Naive thymus-derived CD4-positive, alpha-beta T cell (primary cell): ENCODE measurements at regions of chr2 and their contacts with region 1.

Region 1: GRCh38 chr2:233976690-233977294 is 59.6 kb downstream of the TRPM8 start:
- DNase-seq: peak in 6 of 9 donors; percentile 29 to 62 (median 55)
- ATAC-seq: peak; percentile 60
- H3K4me3 ChIP-seq: no peak overlapping the region
- H3K4me3 Mint-ChIP-seq: no peak overlapping the region
- H3K27ac ChIP-seq: no peak overlapping the region
- H3K27ac Mint-ChIP-seq: peak overlapping the region in 2 of 9 donors; percentile 7 to 69
- H3K4me1 ChIP-seq: peaks cover 0 to 25% of the 10 kb centered on the region in 2 donors
- H3K4me1 Mint-ChIP-seq: peaks cover 3 to 37% (median 25%) of the 10 kb centered on the region in 7 donors
- H3K27me3 ChIP-seq: no peaks in the 10 kb centered on the region
- H3K27me3 Mint-ChIP-seq: peaks cover 0 to 9% (median 0%) of the 10 kb centered on the region in 5 donors

Region 2: GRCh38 chr2:234102112-234102511 is 125.3 kb after region 1 on chr2:
- CTCF ChIA-PET with region 1: interaction called, 3 read pairs
- POLR2A ChIA-PET with region 1: no interaction called
- intact Hi-C with region 1: loop called (anchors 1 to 2 kb)
- DNase-seq: peak in 7 of 9 donors; percentile 16 to 64 (median 47)
- ATAC-seq: peak; percentile 73
- H3K4me3 ChIP-seq: no peak overlapping the region
- H3K4me3 Mint-ChIP-seq: peak overlapping the region in 8 of 10 donors; percentile 4 to 64 (median 28)
- H3K27ac ChIP-seq: no peak overlapping the region
- H3K27ac Mint-ChIP-seq: peak overlapping the region in 3 of 9 donors; percentile 9 to 64 (median 43)
- H3K4me1 ChIP-seq: peaks cover 36 to 37% of the 10 kb centered on the region in 2 donors
- H3K4me1 Mint-ChIP-seq: peaks cover 25 to 55% (median 43%) of the 10 kb centered on the region in 7 donors
- H3K27me3 ChIP-seq: no peaks in the 10 kb centered on the region
- H3K27me3 Mint-ChIP-seq: peaks cover 0 to 30% (median 0%) of the 10 kb centered on the region in 5 donors

Region 3: GRCh38 chr2:234125451-234126145 is 148.8 kb after region 1 on chr2:
- CTCF ChIA-PET with region 1: no interaction called
- POLR2A ChIA-PET with region 1: no interaction called
- intact Hi-C with region 1: no loop called
- DNase-seq: no peak
- ATAC-seq: no peak
- H3K4me3 ChIP-seq: no peak overlapping the region
- H3K4me3 Mint-ChIP-seq: no peak overlapping the region
- H3K27ac ChIP-seq: no peak overlapping the region
- H3K27ac Mint-ChIP-seq: no peak overlapping the region
- H3K4me1 ChIP-seq: no peaks in the 10 kb centered on the region
- H3K4me1 Mint-ChIP-seq: peaks cover 0 to 8% (median 4%) of the 10 kb centered on the region in 7 donors
- H3K27me3 ChIP-seq: no peaks in the 10 kb centered on the region
- H3K27me3 Mint-ChIP-seq: peaks cover 0 to 27% (median 0%) of the 10 kb centered on the region in 5 donors

Region 4: DNA sequence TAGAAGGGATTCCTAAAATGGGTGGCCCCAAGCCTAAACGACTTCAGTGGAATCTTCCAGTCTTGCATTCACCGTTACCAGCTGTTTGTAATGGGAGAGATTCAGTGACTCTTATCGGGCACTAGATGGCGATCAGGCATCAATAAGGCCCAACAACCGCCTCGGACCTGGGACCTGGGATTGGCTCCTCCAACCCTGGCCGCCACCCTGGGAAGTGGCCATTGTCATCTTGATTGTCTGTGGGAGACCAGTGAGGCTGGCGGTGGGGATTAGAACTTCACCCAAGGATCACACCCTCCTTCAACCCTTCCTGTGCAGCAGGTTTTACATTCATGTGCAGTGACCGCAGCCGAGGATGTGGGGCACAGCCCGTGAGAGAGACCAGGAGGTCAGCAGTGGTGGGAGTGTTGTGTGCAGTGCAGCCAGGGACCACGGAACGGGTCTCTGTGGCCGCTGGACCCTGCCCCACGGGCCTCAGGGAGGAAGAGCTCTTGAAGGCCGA is 159.0 kb after region 1 on chr2:
- CTCF ChIA-PET with region 1: interaction called, 9 read pairs
- POLR2A ChIA-PET with region 1: interaction called, 3 read pairs
- intact Hi-C with region 1: loop called (anchors 1 to 2 kb)
- DNase-seq: peak; percentile 13 to 52 (median 40)
- ATAC-seq: peak; percentile 73
- H3K4me3 ChIP-seq: peak overlapping the region; percentile 2
- H3K4me3 Mint-ChIP-seq: peak overlapping the region in 2 of 10 donors; percentile 9 to 30
- H3K27ac ChIP-seq: no peak overlapping the region
- H3K27ac Mint-ChIP-seq: peak overlapping the region; percentile 31 to 83 (median 56)
- H3K4me1 ChIP-seq: peaks cover 23 to 24% of the 10 kb centered on the region in 2 donors
- H3K4me1 Mint-ChIP-seq: peaks cover 6 to 31% (median 29%) of the 10 kb centered on the region in 7 donors
- H3K27me3 ChIP-seq: no peaks in the 10 kb centered on the region
- H3K27me3 Mint-ChIP-seq: peaks cover 0 to 17% (median 0%) of the 10 kb centered on the region in 5 donors

Region 5: GRCh38 chr2:234278556-234279255 is 301.9 kb after region 1 on chr2:
- CTCF ChIA-PET with region 1: no interaction called
- POLR2A ChIA-PET with region 1: no interaction called
- intact Hi-C with region 1: loop called in 1 of 2 experiments (anchors 5 kb)
- DNase-seq: peak in 7 of 9 donors; percentile 28 to 77 (median 69)
- ATAC-seq: peak; percentile 81
- H3K4me3 ChIP-seq: no peak overlapping the region
- H3K4me3 Mint-ChIP-seq: peak overlapping the region in 9 of 10 donors; percentile 0 to 64 (median 52)
- H3K27ac ChIP-seq: no peak overlapping the region
- H3K27ac Mint-ChIP-seq: peak overlapping the region; percentile 38 to 90 (median 77)
- H3K4me1 ChIP-seq: peaks cover 16 to 42% of the 10 kb centered on the region in 2 donors
- H3K4me1 Mint-ChIP-seq: peaks cover 27 to 75% (median 59%) of the 10 kb centered on the region in 7 donors
- H3K27me3 ChIP-seq: no peaks in the 10 kb centered on the region
- H3K27me3 Mint-ChIP-seq: no peaks in the 10 kb centered on the region

Region 6: DNA sequence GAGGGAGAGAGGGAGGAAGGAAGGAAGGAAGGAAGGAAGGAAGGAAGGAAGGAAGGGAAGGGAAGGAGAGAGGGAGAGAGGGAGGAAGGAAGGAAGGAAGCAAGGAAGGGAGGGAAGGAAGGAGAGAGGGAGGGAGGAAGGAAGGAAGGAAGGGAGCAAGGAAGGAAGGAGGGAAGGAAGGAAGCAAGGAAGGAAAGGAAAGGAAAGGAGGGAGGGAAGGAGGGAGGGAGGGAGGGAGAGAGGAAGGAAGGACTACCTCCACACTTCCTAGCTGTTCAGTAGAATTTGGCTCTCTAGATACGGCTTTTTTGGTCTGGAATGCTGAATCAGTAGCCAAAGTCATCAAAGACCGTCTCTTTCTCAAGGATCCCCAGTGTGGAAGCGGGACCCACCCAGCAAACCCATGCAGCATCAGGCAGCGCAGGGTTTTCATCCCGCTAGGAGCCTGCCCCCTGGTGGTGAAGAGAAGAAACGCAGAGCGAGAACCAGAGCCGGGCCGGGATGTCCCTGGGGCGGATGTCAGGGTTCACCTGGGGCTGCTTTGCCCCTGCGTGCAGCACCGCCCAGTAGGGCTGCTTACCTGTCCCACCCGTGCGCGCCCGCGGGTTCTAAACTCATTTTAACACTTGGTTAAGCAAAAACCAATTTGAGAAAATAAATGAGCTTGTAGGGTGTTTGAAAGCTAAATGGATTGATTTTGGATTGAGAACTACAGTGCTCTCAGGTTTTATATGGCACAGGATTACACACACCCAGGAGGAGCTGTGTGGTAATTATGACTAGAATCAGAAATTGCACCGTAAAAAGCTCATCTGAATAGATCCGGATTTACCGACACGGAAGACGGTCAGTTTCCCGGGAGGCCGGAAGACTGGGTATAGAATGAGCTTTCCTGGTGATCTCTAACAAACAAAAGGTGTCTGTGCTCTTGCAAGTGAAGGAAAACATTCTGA is 568.1 kb after region 1 on chr2:
- CTCF ChIA-PET with region 1: interaction called, 12 read pairs
- POLR2A ChIA-PET with region 1: no interaction called
- intact Hi-C with region 1: loop called (anchors 1 kb)
- DNase-seq: peak; percentile 54 to 83 (median 69)
- ATAC-seq: peak; percentile 93
- H3K4me3 ChIP-seq: no peak overlapping the region
- H3K4me3 Mint-ChIP-seq: no peak overlapping the region
- H3K27ac ChIP-seq: no peak overlapping the region
- H3K27ac Mint-ChIP-seq: no peak overlapping the region
- H3K4me1 ChIP-seq: peaks cover 0 to 5% of the 10 kb centered on the region in 2 donors
- H3K4me1 Mint-ChIP-seq: peaks cover 0 to 9% (median 1%) of the 10 kb centered on the region in 7 donors
- H3K27me3 ChIP-seq: no peaks in the 10 kb centered on the region
- H3K27me3 Mint-ChIP-seq: peaks cover under 1 to 31% (median 13%) of the 10 kb centered on the region in 5 donors

Region 7: GRCh38 chr2:235116885-235117492 is 1140.2 kb after region 1 on chr2:
- CTCF ChIA-PET with region 1: no interaction called
- POLR2A ChIA-PET with region 1: no interaction called
- intact Hi-C with region 1: loop called in 1 of 2 experiments (anchors 5 kb)
- DNase-seq: peak in 4 of 9 donors; percentile 7 to 10 (median 8)
- ATAC-seq: no peak
- H3K4me3 ChIP-seq: no peak overlapping the region
- H3K4me3 Mint-ChIP-seq: no peak overlapping the region
- H3K27ac ChIP-seq: no peak overlapping the region
- H3K27ac Mint-ChIP-seq: no peak overlapping the region
- H3K4me1 ChIP-seq: no peaks in the 10 kb centered on the region
- H3K4me1 Mint-ChIP-seq: no peaks in the 10 kb centered on the region
- H3K27me3 ChIP-seq: no peaks in the 10 kb centered on the region
- H3K27me3 Mint-ChIP-seq: peaks cover 10 to 37% (median 32%) of the 10 kb centered on the region in 5 donors

Region 8: GRCh38 chr2:235595422-235596010 is 1618.7 kb after region 1 on chr2:
- CTCF ChIA-PET with region 1: no interaction called
- POLR2A ChIA-PET with region 1: no interaction called
- intact Hi-C with region 1: loop called in 1 of 2 experiments (anchors 10 kb)
- DNase-seq: peak in 4 of 9 donors; percentile 1 to 31 (median 4)
- ATAC-seq: no peak
- H3K4me3 ChIP-seq: no peak overlapping the region
- H3K4me3 Mint-ChIP-seq: no peak overlapping the region
- H3K27ac ChIP-seq: no peak overlapping the region
- H3K27ac Mint-ChIP-seq: no peak overlapping the region
- H3K4me1 ChIP-seq: no peaks in the 10 kb centered on the region
- H3K4me1 Mint-ChIP-seq: no peaks in the 10 kb centered on the region
- H3K27me3 ChIP-seq: no peaks in the 10 kb centered on the region
- H3K27me3 Mint-ChIP-seq: peaks cover 0 to 12% (median 8%) of the 10 kb centered on the region in 5 donors